B cell (primary cell): ENCODE measurements at regions of chr11 and their contacts with region 1.

Region 1: DNA sequence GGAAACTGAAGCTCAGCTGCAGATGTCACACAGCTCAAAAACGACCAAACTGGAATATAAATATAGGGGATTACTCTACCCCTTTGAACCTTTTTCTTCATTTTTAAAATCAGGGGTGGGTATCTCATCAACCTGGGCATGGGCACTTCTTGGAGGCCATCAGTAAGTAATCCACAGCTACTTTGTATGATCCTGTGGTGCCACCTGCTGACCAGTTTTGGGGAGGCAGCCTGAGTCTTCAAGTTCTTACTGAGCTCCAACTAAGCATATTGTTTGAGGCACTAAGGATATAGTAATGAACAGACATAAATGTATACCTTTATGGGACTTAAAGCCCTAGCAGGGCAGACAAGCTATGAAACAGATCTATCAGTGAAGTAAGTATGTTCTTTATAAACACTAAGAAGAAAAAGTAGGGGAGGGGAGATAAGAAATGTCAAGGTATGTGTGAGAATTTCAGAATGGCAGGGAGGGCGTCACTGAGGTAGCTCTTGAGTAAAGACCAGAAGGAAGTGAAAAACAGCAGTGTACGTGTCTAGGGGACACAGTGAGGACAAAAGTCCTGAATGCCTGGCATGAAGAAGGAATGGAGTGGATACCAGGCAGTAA is 18.4 kb downstream of the TUB start:
- DNase-seq: peak; percentile 69
- ATAC-seq: peak; percentile 64
- H3K4me3 ChIP-seq: no peak overlapping the region
- H3K4me3 Mint-ChIP-seq: no peak overlapping the region
- H3K27ac ChIP-seq: no peak overlapping the region
- H3K27ac Mint-ChIP-seq: no peak overlapping the region
- H3K4me1 ChIP-seq: no peaks in the 10 kb centered on the region
- H3K4me1 Mint-ChIP-seq: peaks cover 2% of the 10 kb centered on the region
- H3K27me3 ChIP-seq: no peaks in the 10 kb centered on the region
- H3K27me3 Mint-ChIP-seq: no peaks in the 10 kb centered on the region
- CTCF ChIP-seq: peak; percentile 88

Region 2: DNA sequence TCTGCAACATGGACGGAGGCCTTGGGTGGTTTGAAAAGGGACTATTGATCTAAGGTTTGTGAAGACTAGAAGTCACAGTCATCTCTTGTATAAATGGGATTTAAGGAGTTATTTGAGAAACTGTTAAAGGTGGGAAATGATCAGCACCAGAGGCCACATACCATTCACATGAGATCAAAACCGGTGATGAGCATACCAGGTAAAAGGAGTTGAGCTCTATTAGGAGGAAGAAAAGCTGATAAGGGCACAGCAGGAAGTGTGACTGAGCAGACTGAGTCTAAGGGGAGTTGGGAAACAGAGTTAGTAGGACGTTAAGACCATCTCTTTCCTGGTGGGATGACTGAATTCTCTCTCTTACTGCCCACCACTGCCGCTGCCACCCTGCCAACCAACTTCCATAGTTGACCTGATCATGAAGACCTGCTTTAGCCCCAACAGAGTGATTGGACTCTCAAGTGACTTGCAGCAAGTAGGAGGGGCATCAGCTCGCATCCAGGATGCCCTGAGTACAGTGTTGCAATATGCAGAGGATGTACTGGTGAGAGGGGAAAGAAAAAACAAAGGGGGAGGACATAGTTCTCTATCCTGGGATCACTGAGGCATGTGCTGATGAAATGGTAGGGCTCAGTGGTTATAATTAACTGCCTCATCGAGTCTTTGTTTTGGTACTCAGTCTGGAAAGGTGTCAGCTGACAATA is 104.7 kb before region 1 on chr11:
- CTCF ChIA-PET with region 1: no interaction called
- POLR2A ChIA-PET with region 1: no interaction called
- intact Hi-C with region 1: no loop called
- DNase-seq: no peak
- ATAC-seq: no peak
- H3K4me3 ChIP-seq: no peak overlapping the region
- H3K4me3 Mint-ChIP-seq: no peak overlapping the region
- H3K27ac ChIP-seq: no peak overlapping the region
- H3K27ac Mint-ChIP-seq: no peak overlapping the region
- H3K4me1 ChIP-seq: no peaks in the 10 kb centered on the region
- H3K4me1 Mint-ChIP-seq: peaks cover 8% of the 10 kb centered on the region
- H3K27me3 ChIP-seq: no peaks in the 10 kb centered on the region
- H3K27me3 Mint-ChIP-seq: no peaks in the 10 kb centered on the region
- CTCF ChIP-seq: no peak

Region 3: GRCh38 chr11:8033305-8034105 is 65.9 kb before region 1 on chr11:
- CTCF ChIA-PET with region 1: interaction called, 85 read pairs
- POLR2A ChIA-PET with region 1: no interaction called
- intact Hi-C with region 1: loop called (anchors 1 kb)
- DNase-seq: peak; percentile 69
- ATAC-seq: peak; percentile 83
- H3K4me3 ChIP-seq: no peak overlapping the region
- H3K4me3 Mint-ChIP-seq: no peak overlapping the region
- H3K27ac ChIP-seq: no peak overlapping the region
- H3K27ac Mint-ChIP-seq: no peak overlapping the region
- H3K4me1 ChIP-seq: peaks cover 0 to 8% of the 10 kb centered on the region in 2 donors
- H3K4me1 Mint-ChIP-seq: peaks cover 6% of the 10 kb centered on the region
- H3K27me3 ChIP-seq: peaks cover 0 to 31% (median 9%) of the 10 kb centered on the region in 4 experiments
- H3K27me3 Mint-ChIP-seq: peaks cover 45% of the 10 kb centered on the region
- CTCF ChIP-seq: peak; percentile 86

Region 4: GRCh38 chr11:8111636-8112035 is 12.2 kb after region 1 on chr11:
- CTCF ChIA-PET with region 1: interaction called, 35 read pairs
- POLR2A ChIA-PET with region 1: no interaction called
- intact Hi-C with region 1: no loop called
- DNase-seq: no peak
- ATAC-seq: no peak
- H3K4me3 ChIP-seq: no peak overlapping the region
- H3K4me3 Mint-ChIP-seq: no peak overlapping the region
- H3K27ac ChIP-seq: no peak overlapping the region
- H3K27ac Mint-ChIP-seq: no peak overlapping the region
- H3K4me1 ChIP-seq: no peaks in the 10 kb centered on the region
- H3K4me1 Mint-ChIP-seq: no peaks in the 10 kb centered on the region
- H3K27me3 ChIP-seq: no peaks in the 10 kb centered on the region
- H3K27me3 Mint-ChIP-seq: no peaks in the 10 kb centered on the region
- CTCF ChIP-seq: no peak

Region 5: DNA sequence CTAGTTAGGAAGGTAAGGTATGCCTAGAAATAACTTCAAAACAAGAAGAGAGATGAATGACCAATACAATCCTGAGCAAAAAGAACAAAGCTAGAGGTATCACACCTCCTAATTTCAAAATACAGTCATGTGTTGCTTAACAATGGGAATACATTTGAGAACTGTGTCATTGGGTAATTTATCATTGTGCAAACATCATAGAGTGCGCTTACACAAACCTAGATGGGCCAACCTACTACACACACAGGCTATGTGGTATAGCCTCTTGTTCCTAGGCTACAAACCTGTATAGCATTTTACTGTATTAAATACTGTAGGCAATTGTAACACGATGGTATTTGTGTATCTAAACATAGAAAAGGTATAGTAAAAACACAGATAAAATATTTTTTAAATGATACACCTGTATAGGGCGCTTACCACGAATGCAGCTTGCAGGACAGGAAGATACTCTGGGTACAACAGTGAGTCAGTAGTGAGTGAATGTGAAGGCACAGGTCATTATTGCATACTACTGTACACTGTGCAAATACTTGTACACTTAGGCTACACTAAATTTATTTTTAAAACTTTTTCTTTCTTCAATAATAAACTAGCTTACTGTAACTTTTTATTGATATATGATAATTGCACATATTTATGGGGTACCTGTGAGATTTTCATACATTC is 446.4 kb after region 1 on chr11:
- CTCF ChIA-PET with region 1: no interaction called
- POLR2A ChIA-PET with region 1: no interaction called
- intact Hi-C with region 1: no loop called
- DNase-seq: no peak
- ATAC-seq: no peak
- H3K4me3 ChIP-seq: no peak overlapping the region
- H3K4me3 Mint-ChIP-seq: no peak overlapping the region
- H3K27ac ChIP-seq: no peak overlapping the region
- H3K27ac Mint-ChIP-seq: no peak overlapping the region
- H3K4me1 ChIP-seq: no peaks in the 10 kb centered on the region
- H3K4me1 Mint-ChIP-seq: no peaks in the 10 kb centered on the region
- H3K27me3 ChIP-seq: no peaks in the 10 kb centered on the region
- H3K27me3 Mint-ChIP-seq: peaks cover 2% of the 10 kb centered on the region
- CTCF ChIP-seq: no peak